Caco-2 (cell line): ENCODE measurements at regions of chr19 and their contacts with region 1.

Region 1: GRCh38 chr19:58326914-58327726 is at the start of gene ZSCAN22:
- DNase-seq: peak; percentile 95 to 96
- H3K4me3 ChIP-seq: peak within 1 kb of the TSS; percentile 79
- H3K4me3 Mint-ChIP-seq: no peak within 1 kb of the TSS
- H3K27ac Mint-ChIP-seq: no peak within 1 kb of the TSS
- H3K4me1 ChIP-seq: peaks cover 4% of the 10 kb centered on the region; the same call in 1 of the 2 replicates
- H3K4me1 Mint-ChIP-seq: peaks cover 5% of the 10 kb centered on the region
- H3K27me3 ChIP-seq: no peaks in the 10 kb centered on the region
- H3K27me3 Mint-ChIP-seq: no peaks in the 10 kb centered on the region
- CTCF ChIP-seq: no peak
- total RNA-seq, gene ZSCAN22: 4.0 and 4.3 TPM in 2 replicates

Region 2: DNA sequence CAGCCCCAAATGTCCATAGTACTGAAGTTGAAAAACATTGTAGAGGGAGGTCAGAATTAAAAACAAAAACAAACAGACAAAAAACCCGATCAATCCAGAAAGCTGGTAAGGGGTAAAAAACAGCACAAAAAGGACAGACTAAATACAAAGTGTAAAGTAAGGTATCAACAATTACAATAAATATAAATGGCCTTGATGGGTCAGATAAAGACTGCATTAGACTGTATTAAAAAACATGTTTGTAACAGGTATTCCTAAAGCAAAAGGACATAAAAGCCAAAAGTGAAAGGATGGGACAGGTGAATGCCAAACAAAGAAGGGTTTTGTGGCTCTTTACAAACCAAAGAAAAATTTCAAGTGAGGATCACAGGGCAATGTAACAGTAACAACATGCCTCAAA is 192.9 kb before region 1 on chr19:
- CTCF ChIA-PET with region 1: no interaction called
- POLR2A ChIA-PET with region 1: no interaction called
- intact Hi-C with region 1: no loop called
- DNase-seq: no peak
- H3K4me3 ChIP-seq: no peak overlapping the region
- H3K4me3 Mint-ChIP-seq: no peak overlapping the region
- H3K27ac Mint-ChIP-seq: no peak overlapping the region
- H3K4me1 ChIP-seq: no peaks in the 10 kb centered on the region
- H3K4me1 Mint-ChIP-seq: no peaks in the 10 kb centered on the region
- H3K27me3 ChIP-seq: no peaks in the 10 kb centered on the region
- H3K27me3 Mint-ChIP-seq: no peaks in the 10 kb centered on the region
- CTCF ChIP-seq: no peak

Region 3: GRCh38 chr19:58305065-58305931 is 21.8 kb before region 1 on chr19 and contains the start of gene ERVK3-1:
- CTCF ChIA-PET with region 1: no interaction called
- POLR2A ChIA-PET with region 1: no interaction called
- intact Hi-C with region 1: loop called (anchors 1 kb)
- DNase-seq: peak; percentile 94 to 95
- H3K4me3 ChIP-seq: peak within 1 kb of the TSS; percentile 68
- H3K4me3 Mint-ChIP-seq: peak within 1 kb of the TSS; percentile 93
- H3K27ac Mint-ChIP-seq: peak within 1 kb of the TSS; percentile 97
- H3K4me1 ChIP-seq: peaks cover 11% of the 10 kb centered on the region
- H3K4me1 Mint-ChIP-seq: peaks cover 8% of the 10 kb centered on the region
- H3K27me3 ChIP-seq: no peaks in the 10 kb centered on the region
- H3K27me3 Mint-ChIP-seq: no peaks in the 10 kb centered on the region
- CTCF ChIP-seq: no peak
- total RNA-seq, gene ERVK3-1: 61.3 and 66.1 TPM in 2 replicates

Region 4: DNA sequence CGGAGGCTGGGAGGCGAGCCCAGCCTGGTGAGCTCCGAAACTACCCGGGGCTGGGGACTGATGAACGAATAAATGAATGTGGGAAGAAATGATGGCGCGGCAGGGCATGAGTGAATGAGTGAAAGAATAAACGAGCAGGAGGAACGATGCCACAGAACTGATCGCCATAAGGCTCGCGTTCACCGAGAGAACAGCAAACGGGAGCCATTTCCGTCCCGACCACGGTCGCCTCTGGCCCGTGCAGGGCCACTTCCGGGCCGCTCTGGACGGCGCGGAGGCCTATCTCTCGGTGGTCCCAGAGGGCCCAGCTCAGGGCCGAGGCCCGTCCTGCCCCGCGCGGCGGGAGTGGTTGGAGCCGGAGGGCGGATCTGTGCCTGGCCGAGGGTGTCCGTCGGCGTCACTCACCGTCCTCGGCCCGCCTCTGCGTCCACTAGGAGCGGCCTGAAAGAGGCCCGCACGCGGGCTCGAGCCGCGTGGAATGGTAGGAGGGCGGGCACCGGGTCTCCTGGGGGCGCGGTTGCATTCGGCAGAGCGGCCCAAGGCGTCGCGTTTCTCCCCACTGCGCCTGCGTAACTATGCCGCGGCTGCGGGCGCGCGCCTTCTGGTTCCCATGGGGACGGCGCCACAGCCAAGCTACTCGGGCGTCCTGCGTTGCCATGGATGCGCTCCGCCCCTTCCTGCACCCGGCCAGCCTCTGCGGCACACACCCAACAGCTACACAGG is 35.3 kb after region 1 on chr19 and contains the start of gene ZNF497:
- CTCF ChIA-PET with region 1: interaction called, 4 read pairs
- POLR2A ChIA-PET with region 1: interaction called, 6 read pairs
- intact Hi-C with region 1: loop called (anchors 1 kb)
- DNase-seq: peak; percentile 96 to 97
- H3K4me3 ChIP-seq: peak within 1 kb of the TSS; percentile 78
- H3K4me3 Mint-ChIP-seq: peak within 1 kb of the TSS; percentile 95
- H3K27ac Mint-ChIP-seq: peak within 1 kb of the TSS; percentile 98
- H3K4me1 ChIP-seq: peaks cover 5% of the 10 kb centered on the region; the same call in 1 of the 2 replicates
- H3K4me1 Mint-ChIP-seq: no peaks in the 10 kb centered on the region
- H3K27me3 ChIP-seq: no peaks in the 10 kb centered on the region
- H3K27me3 Mint-ChIP-seq: no peaks in the 10 kb centered on the region
- CTCF ChIP-seq: no peak
- total RNA-seq, gene ZNF497: 1.6 and 1.7 TPM in 2 replicates

Region 5: GRCh38 chr19:58372311-58373133 is 45.4 kb after region 1 on chr19:
- CTCF ChIA-PET with region 1: no interaction called
- POLR2A ChIA-PET with region 1: no interaction called
- intact Hi-C with region 1: loop called (anchors 2 kb)
- DNase-seq: peak in 1 of 2 experiments; percentile 26
- H3K4me3 ChIP-seq: no peak overlapping the region
- H3K4me3 Mint-ChIP-seq: no peak overlapping the region
- H3K27ac Mint-ChIP-seq: no peak overlapping the region
- H3K4me1 ChIP-seq: no peaks in the 10 kb centered on the region
- H3K4me1 Mint-ChIP-seq: no peaks in the 10 kb centered on the region
- H3K27me3 ChIP-seq: no peaks in the 10 kb centered on the region
- H3K27me3 Mint-ChIP-seq: no peaks in the 10 kb centered on the region
- CTCF ChIP-seq: peak; percentile 39 to 45

Region 6: DNA sequence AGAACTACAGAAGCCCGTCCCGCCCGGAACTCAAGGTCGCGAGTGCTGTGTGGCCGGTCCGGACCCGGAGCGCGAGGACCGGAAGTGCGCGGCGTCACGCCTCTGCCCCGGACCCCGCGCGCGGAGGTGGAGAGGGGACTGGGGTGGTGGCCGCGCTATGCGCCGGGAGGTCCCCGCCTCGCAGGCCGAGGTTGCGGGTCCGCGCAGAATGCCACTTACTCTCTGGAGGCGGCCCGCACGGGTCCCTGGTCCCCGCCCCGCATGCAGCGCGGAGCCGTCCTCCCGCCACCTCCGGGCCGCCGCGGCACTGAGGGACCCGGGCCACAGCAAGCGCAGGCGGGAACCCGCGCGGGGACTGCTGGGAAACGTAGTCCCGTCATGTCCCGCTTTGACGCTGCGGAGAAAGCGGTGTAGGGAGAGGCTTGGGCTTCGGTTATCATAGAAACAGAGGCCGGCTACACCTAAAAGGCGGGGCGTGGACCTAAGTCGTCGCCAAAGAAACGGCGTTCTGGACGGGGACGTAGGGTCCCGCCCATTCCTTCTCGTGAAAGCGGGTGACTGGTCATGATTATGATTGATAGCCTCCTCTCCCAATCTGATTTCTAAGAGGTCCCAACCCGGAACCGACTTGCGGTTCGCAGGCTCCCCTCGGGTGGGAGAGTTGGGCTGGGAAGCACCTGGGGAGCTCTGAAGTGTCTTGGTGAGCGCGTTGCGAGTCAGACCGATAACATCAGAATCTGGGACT is 53.8 kb after region 1 on chr19 and contains the start of gene ZNF837:
- CTCF ChIA-PET with region 1: no interaction called
- POLR2A ChIA-PET with region 1: no interaction called
- intact Hi-C with region 1: loop called (anchors 1 kb)
- DNase-seq: peak; percentile 99 to 100
- H3K4me3 ChIP-seq: peak within 1 kb of the TSS; percentile 68
- H3K4me3 Mint-ChIP-seq: peak within 1 kb of the TSS; percentile 87
- H3K27ac Mint-ChIP-seq: peak within 1 kb of the TSS; percentile 85
- H3K4me1 ChIP-seq: peaks cover 18% of the 10 kb centered on the region
- H3K4me1 Mint-ChIP-seq: peaks cover 12% of the 10 kb centered on the region
- H3K27me3 ChIP-seq: no peaks in the 10 kb centered on the region
- H3K27me3 Mint-ChIP-seq: no peaks in the 10 kb centered on the region
- CTCF ChIP-seq: no peak
- total RNA-seq, gene ZNF837: 2.2 and 2.3 TPM in 2 replicates